CD4-positive, alpha-beta memory T cell (primary cell): ENCODE measurements at regions of chr16 and their contacts with region 1.

Region 1: GRCh38 chr16:82169861-82170845 is at the start of gene MPHOSPH6:
- DNase-seq: peak; percentile 87 to 90 (median 88)
- H3K4me3 ChIP-seq: peak within 1 kb of the TSS; percentile 59 to 76
- H3K4me3 Mint-ChIP-seq: peak within 1 kb of the TSS; percentile 91 to 99 (median 96)
- H3K27ac ChIP-seq: peak within 1 kb of the TSS; percentile 76
- H3K27ac Mint-ChIP-seq: peak within 1 kb of the TSS; percentile 90 to 98 (median 95)
- H3K4me1 ChIP-seq: peaks cover 24% of the 10 kb centered on the region
- H3K4me1 Mint-ChIP-seq: peaks cover 15 to 35% (median 22%) of the 10 kb centered on the region in 4 donors
- H3K27me3 ChIP-seq: no peaks in the 10 kb centered on the region
- H3K27me3 Mint-ChIP-seq: peaks cover 14 to 18% of the 10 kb centered on the region in 2 donors
- total RNA-seq, gene MPHOSPH6: 19.6 to 22.8 TPM

Region 2: GRCh38 chr16:81314603-81315270 is 855.4 kb before region 1 on chr16 and contains the start of gene GAN:
- CTCF ChIA-PET with region 1: no interaction called
- POLR2A ChIA-PET with region 1: interaction called, 3 read pairs
- intact Hi-C with region 1: loop called (anchors 10 kb)
- DNase-seq: peak; percentile 93 to 95 (median 94)
- H3K4me3 ChIP-seq: peak within 1 kb of the TSS; percentile 86 to 93
- H3K4me3 Mint-ChIP-seq: peak within 1 kb of the TSS; percentile 92 to 99 (median 97)
- H3K27ac ChIP-seq: peak within 1 kb of the TSS; percentile 33
- H3K27ac Mint-ChIP-seq: peak within 1 kb of the TSS; percentile 89 to 98 (median 94)
- H3K4me1 ChIP-seq: peaks cover 25% of the 10 kb centered on the region
- H3K4me1 Mint-ChIP-seq: peaks cover 33 to 53% (median 44%) of the 10 kb centered on the region in 4 donors
- H3K27me3 ChIP-seq: no peaks in the 10 kb centered on the region
- H3K27me3 Mint-ChIP-seq: no peaks in the 10 kb centered on the region
- total RNA-seq, gene GAN: 9.5 to 10.8 TPM

Region 3: DNA sequence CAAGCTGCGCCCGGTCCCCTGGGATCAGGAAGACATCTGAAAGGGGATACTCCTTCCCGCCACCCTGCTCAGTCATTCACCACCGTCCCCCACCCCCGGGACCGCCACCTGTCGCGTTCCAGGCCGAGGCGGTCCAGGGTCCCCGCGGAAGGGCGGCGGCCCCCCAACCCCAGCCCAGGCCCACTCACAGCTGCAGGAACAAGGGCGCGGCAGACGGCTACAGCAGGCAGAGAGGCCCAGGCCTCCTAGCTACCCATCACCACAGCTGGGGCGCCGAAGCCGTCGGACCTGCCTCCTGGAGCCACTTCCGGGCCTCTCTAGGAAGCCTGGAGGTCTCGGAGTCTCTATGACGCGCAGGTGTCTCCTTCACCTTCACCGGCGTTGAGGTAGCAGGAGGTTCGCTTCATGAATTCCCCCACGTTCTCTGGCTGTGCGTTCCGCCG is 158.9 kb before region 1 on chr16 and contains the start of gene SDR42E1:
- CTCF ChIA-PET with region 1: no interaction called
- POLR2A ChIA-PET with region 1: no interaction called
- intact Hi-C with region 1: loop called (anchors 5 kb)
- DNase-seq: peak; percentile 59 to 74 (median 66)
- H3K4me3 ChIP-seq: peak within 1 kb of the TSS; percentile 57 to 68
- H3K4me3 Mint-ChIP-seq: peak within 1 kb of the TSS; percentile 82 to 95 (median 90)
- H3K27ac ChIP-seq: no peak within 1 kb of the TSS
- H3K27ac Mint-ChIP-seq: peak within 1 kb of the TSS in 6 of 7 donors; percentile 18 to 95 (median 88)
- H3K4me1 ChIP-seq: peaks cover 8% of the 10 kb centered on the region
- H3K4me1 Mint-ChIP-seq: peaks cover 13 to 28% (median 20%) of the 10 kb centered on the region in 4 donors
- H3K27me3 ChIP-seq: no peaks in the 10 kb centered on the region
- H3K27me3 Mint-ChIP-seq: peaks cover 6 to 12% of the 10 kb centered on the region in 2 donors
- total RNA-seq, gene SDR42E1: 8.1 to 9.8 TPM

Region 4: DNA sequence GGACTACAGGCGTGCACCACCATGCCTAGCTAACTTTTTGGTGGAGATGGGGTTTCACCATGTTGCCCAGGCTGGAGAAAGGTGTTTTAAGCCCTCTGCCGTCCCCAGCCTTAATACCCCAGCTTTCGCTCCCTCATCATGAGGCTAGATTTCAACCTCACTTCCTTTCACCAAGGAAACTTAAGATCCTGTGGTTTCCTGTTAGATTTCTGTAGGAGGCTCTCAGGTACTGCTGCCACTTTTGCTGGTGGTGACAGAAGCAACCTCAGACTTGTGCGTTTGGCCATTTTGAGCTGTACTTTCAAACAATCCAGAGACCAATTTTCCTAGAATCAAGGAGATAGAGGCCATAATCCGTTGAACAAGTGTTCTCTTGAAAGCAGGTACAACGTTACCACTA is 36.4 kb before region 1 on chr16:
- CTCF ChIA-PET with region 1: interaction called, 8 read pairs
- POLR2A ChIA-PET with region 1: interaction called, 15 read pairs
- intact Hi-C with region 1: no loop called
- DNase-seq: peak; percentile 18 to 39 (median 31)
- H3K4me3 ChIP-seq: peak overlapping the region in 1 of 2 donors; percentile 36
- H3K4me3 Mint-ChIP-seq: peak overlapping the region; percentile 51 to 84 (median 66)
- H3K27ac ChIP-seq: no peak overlapping the region
- H3K27ac Mint-ChIP-seq: peak overlapping the region; percentile 20 to 93 (median 73)
- H3K4me1 ChIP-seq: peaks cover 19% of the 10 kb centered on the region
- H3K4me1 Mint-ChIP-seq: peaks cover 13 to 29% (median 19%) of the 10 kb centered on the region in 4 donors
- H3K27me3 ChIP-seq: no peaks in the 10 kb centered on the region
- H3K27me3 Mint-ChIP-seq: no peaks in the 10 kb centered on the region

Region 5: DNA sequence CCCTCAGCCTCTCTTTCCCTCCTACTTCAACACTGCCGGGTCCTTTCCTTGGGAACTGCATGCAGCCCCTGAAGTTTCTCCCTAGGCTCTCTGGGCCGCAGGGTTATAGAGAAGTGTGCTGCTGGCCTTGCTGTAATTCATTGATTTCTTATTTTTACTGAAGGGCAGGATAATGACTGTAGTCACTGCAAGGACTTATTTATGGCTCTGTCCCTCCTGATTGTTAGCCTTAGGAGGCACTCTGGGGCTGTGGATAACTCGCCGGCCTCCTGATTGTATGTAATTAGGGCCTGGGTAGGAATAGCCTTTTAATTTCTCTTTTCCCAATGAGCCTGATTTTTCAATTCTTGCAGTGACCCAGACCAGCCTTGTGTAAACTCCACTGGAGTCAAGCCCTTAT is 318.3 kb after region 1 on chr16:
- CTCF ChIA-PET with region 1: no interaction called
- POLR2A ChIA-PET with region 1: no interaction called
- intact Hi-C with region 1: no loop called
- DNase-seq: no peak
- H3K4me3 ChIP-seq: no peak overlapping the region
- H3K4me3 Mint-ChIP-seq: no peak overlapping the region
- H3K27ac ChIP-seq: no peak overlapping the region
- H3K27ac Mint-ChIP-seq: no peak overlapping the region
- H3K4me1 ChIP-seq: no peaks in the 10 kb centered on the region
- H3K4me1 Mint-ChIP-seq: no peaks in the 10 kb centered on the region
- H3K27me3 ChIP-seq: no peaks in the 10 kb centered on the region
- H3K27me3 Mint-ChIP-seq: peaks cover 0 to 8% of the 10 kb centered on the region in 2 donors